ENCODE measurements at regions of chr12 and their contacts with region 1.

Region 1: DNA sequence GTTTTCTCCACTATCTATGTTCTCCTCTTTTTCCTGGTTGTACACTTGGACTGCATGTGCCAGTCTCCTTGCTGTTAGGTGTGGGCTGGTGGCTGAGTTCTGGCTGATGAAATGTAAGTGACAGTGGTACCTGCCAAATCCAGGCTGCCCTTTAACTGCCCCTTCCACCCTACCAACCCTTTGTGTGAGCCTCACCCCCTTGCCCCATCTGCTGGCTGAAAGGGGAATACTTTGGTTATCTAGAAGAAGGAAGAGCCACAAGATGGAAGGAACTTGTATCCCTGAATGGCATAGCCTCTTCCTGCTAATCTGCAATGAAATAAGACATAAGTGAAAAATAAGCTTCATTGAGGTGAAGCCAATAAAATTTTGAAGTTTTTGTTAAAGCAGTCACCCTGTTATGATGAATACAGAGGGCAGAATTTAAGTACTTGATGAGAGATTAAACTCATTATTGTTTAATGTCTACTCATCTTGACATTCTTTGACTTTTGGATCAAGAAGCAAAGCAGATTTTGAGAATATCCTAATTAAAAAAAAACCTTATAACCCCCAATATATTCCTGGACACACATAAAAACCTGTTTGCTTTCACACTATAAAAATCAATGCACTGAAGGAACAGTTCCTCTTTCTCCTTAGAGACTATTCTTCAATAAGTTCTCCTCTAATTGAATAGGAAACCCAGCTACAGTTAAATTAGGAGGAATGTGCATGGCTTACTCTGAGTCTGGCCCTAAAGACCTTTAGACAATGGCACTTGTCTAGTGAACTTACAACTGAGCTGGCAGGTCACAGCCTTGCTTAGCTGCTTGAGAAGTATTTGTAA is 262.6 kb upstream of the BTG1 start:
- DNase-seq: peak in 3 of 9 donors; percentile 29 to 40 (median 30)
- ATAC-seq: peak; percentile 34
- H3K4me3 ChIP-seq: no peak overlapping the region
- H3K4me3 Mint-ChIP-seq: peak overlapping the region in 4 of 10 donors; percentile 18 to 58 (median 28)
- H3K27ac ChIP-seq: no peak overlapping the region
- H3K27ac Mint-ChIP-seq: peak overlapping the region in 8 of 9 donors; percentile 30 to 89 (median 72)
- H3K4me1 ChIP-seq: peaks cover 30 to 33% of the 10 kb centered on the region in 2 donors
- H3K4me1 Mint-ChIP-seq: peaks cover 21 to 80% (median 67%) of the 10 kb centered on the region in 7 donors
- H3K27me3 ChIP-seq: no peaks in the 10 kb centered on the region
- H3K27me3 Mint-ChIP-seq: no peaks in the 10 kb centered on the region

Region 2: DNA sequence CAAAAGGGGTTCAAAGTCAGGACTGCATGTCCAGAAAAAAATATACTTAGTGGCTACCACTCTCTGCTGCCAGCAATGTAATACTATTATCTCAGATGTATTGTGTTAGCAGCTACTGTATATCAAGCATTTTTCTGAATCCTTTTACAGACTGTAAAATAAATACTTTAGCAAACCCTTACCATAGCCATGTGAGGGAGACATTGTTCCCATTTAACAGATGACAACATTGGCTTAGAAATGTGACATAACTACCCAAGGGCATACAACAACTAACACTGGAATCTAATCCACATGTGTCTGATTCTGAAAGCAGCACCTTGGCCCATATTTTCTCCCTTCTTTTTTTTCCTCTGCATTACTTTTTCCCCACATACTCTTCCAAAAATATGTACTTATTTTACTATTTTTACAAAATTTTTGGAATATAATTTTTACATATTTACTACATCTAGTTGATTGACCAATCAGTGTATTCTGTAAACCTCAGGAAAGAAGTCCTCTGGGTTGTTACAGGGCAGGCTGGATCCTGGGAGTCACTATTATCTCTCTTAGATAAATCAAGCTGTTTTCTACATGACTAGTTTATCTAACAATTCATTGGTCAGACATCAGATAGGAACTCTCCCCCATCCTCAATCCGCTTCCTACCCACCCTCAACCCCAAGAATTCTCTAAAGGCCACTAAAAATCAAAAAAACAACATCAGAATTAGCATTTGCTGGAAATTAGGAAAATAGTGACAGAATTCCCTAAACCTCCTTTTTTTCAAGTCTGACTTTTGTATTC is 416.7 kb before region 1 on chr12:
- CTCF ChIA-PET with region 1: no interaction called
- POLR2A ChIA-PET with region 1: no interaction called
- intact Hi-C with region 1: loop called (anchors 5 kb)
- DNase-seq: peak in 5 of 9 donors; percentile 22 to 64 (median 48)
- ATAC-seq: peak; percentile 83
- H3K4me3 ChIP-seq: no peak overlapping the region
- H3K4me3 Mint-ChIP-seq: peak overlapping the region in 5 of 10 donors; percentile 18 to 50 (median 32)
- H3K27ac ChIP-seq: peak overlapping the region; percentile 26
- H3K27ac Mint-ChIP-seq: peak overlapping the region in 7 of 9 donors; percentile 8 to 92 (median 70)
- H3K4me1 ChIP-seq: peaks cover 9 to 27% of the 10 kb centered on the region in 2 donors
- H3K4me1 Mint-ChIP-seq: peaks cover 9 to 92% (median 79%) of the 10 kb centered on the region in 7 donors
- H3K27me3 ChIP-seq: no peaks in the 10 kb centered on the region
- H3K27me3 Mint-ChIP-seq: no peaks in the 10 kb centered on the region

Region 3: DNA sequence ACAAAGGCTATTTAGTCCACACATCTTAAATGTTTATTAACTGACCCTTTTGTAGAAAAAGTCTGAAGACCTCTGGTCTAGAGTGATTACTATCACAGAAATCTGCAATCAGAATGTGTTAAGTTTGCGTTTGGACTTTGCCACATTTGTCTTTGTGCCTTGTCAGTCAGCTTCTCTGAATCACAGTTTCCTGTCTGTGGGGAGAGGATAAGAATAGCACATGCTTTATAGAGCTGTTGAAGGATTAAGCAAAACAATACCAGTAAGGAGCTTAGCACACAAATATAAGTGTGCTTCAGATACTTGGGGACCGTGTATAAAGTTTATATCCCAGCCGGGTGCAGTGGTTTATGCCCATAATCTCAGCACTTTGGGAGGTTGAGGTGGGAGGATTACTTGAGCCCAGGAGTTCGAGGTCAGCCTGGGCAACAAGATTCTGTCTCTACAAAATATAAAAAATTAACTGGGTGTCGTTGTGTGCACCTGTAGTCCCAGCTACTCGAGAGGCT is 199.6 kb before region 1 on chr12:
- CTCF ChIA-PET with region 1: interaction called, 4 read pairs
- POLR2A ChIA-PET with region 1: interaction called, 10 read pairs
- intact Hi-C with region 1: no loop called
- DNase-seq: peak in 7 of 9 donors; percentile 55 to 76 (median 63)
- ATAC-seq: peak; percentile 92
- H3K4me3 ChIP-seq: peak overlapping the region; percentile 29
- H3K4me3 Mint-ChIP-seq: peak overlapping the region; percentile 58 to 90 (median 76)
- H3K27ac ChIP-seq: peak overlapping the region; percentile 48
- H3K27ac Mint-ChIP-seq: peak overlapping the region; percentile 72 to 97 (median 95)
- H3K4me1 ChIP-seq: peaks cover 18 to 25% of the 10 kb centered on the region in 2 donors
- H3K4me1 Mint-ChIP-seq: peaks cover 19 to 55% (median 41%) of the 10 kb centered on the region in 7 donors
- H3K27me3 ChIP-seq: no peaks in the 10 kb centered on the region
- H3K27me3 Mint-ChIP-seq: no peaks in the 10 kb centered on the region

Region 4: DNA sequence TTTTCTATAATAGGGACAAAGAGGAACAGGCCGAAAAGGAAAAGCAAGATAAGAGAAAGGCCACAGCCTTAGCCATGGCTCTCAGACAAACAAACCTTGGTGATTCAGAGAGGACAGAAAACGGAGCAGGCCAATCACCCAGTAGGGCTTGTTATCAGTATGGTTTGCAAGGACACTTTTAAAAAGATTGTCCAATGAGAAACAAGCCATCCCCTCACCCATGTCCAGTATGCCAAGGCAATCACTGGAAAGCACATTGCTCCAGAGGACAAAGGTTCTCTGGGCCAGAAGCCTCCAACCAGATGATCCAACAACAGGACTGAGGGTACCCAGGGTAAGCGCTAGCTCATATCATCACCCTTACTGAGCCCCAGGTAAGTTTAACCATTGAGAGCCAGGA is 18.8 kb before region 1 on chr12:
- CTCF ChIA-PET with region 1: no interaction called
- POLR2A ChIA-PET with region 1: interaction called, 19 read pairs
- intact Hi-C with region 1: no loop called
- DNase-seq: no peak
- ATAC-seq: no peak
- H3K4me3 ChIP-seq: no peak overlapping the region
- H3K4me3 Mint-ChIP-seq: no peak overlapping the region
- H3K27ac ChIP-seq: no peak overlapping the region
- H3K27ac Mint-ChIP-seq: peak overlapping the region in 3 of 9 donors; percentile 12 to 100 (median 41)
- H3K4me1 ChIP-seq: peaks cover 7 to 13% of the 10 kb centered on the region in 2 donors
- H3K4me1 Mint-ChIP-seq: peaks cover 10 to 92% (median 71%) of the 10 kb centered on the region in 7 donors
- H3K27me3 ChIP-seq: no peaks in the 10 kb centered on the region
- H3K27me3 Mint-ChIP-seq: no peaks in the 10 kb centered on the region

Region 5: DNA sequence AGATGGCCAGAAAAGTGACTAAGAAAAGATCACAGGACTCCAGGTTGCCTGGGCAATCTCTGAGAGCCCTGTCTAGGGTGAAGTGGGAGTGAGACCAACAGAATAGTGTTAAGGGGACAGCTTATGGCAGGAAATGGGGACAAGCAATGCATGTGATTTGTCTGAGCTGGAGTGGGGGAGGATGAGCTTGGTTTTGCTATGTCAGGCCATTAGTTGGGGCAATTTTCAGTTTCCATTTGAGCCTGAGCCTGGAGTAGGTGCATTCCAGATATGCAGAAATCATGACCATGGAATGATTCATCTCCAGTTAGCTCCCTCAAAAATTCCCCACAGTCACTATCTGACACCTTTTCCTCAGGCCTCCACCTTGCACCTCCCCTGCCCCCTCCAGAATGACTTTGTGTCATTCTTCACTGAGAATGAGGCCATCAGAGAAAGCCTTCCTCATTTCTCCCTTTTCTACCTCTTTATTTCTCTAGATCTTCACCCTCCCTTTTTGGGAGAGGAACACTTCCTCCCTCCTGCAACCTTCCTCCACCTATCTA is 143.6 kb after region 1 on chr12:
- CTCF ChIA-PET with region 1: no interaction called
- POLR2A ChIA-PET with region 1: interaction called, 5 read pairs
- intact Hi-C with region 1: loop called in 1 of 2 experiments (anchors 5 kb)
- DNase-seq: peak in 1 of 9 donors; percentile 51
- ATAC-seq: no peak
- H3K4me3 ChIP-seq: no peak overlapping the region
- H3K4me3 Mint-ChIP-seq: no peak overlapping the region
- H3K27ac ChIP-seq: no peak overlapping the region
- H3K27ac Mint-ChIP-seq: no peak overlapping the region
- H3K4me1 ChIP-seq: peaks cover 11 to 15% of the 10 kb centered on the region in 2 donors
- H3K4me1 Mint-ChIP-seq: peaks cover 21 to 32% (median 27%) of the 10 kb centered on the region in 7 donors
- H3K27me3 ChIP-seq: no peaks in the 10 kb centered on the region
- H3K27me3 Mint-ChIP-seq: no peaks in the 10 kb centered on the region